Activated CD4-positive, alpha-beta T cell treated with anti-CD3 and anti-CD28 coated beads, Interleukin-2, amount 10 ng/mL, durations not matched to agents 24 days and 14 days (primary cell): ENCODE measurements at regions of chr5 and their contacts with region 1.

Region 1: GRCh38 chr5:109688971-109689739 is 572 bp upstream of the MAN2A1 start:
- DNase-seq: peak; percentile 94
- H3K4me3 Mint-ChIP-seq: peak overlapping the region; percentile 93
- H3K27ac Mint-ChIP-seq: peak overlapping the region; percentile 95
- H3K4me1 Mint-ChIP-seq: peaks cover 35% of the 10 kb centered on the region
- H3K27me3 Mint-ChIP-seq: peaks cover 5% of the 10 kb centered on the region

Region 2: GRCh38 chr5:108381954-108382783 is 1307.0 kb before region 1 on chr5 and contains the start of gene FBXL17:
- intact Hi-C with region 1: loop called (anchors 2 kb)
- DNase-seq: peak; percentile 97
- H3K4me3 Mint-ChIP-seq: peak within 1 kb of the TSS; percentile 84
- H3K27ac Mint-ChIP-seq: peak within 1 kb of the TSS; percentile 91
- H3K4me1 Mint-ChIP-seq: peaks cover 22% of the 10 kb centered on the region
- H3K27me3 Mint-ChIP-seq: no peaks in the 10 kb centered on the region
- total RNA-seq, gene FBXL17: 7.5 and 8.6 TPM in 2 replicates

Region 3: GRCh38 chr5:109611505-109611904 is 77.7 kb before region 1 on chr5:
- intact Hi-C with region 1: no loop called
- DNase-seq: no peak
- H3K4me3 Mint-ChIP-seq: no peak overlapping the region
- H3K27ac Mint-ChIP-seq: no peak overlapping the region
- H3K4me1 Mint-ChIP-seq: no peaks in the 10 kb centered on the region
- H3K27me3 Mint-ChIP-seq: no peaks in the 10 kb centered on the region

Region 4: GRCh38 chr5:109788596-109788995 is 99.4 kb after region 1 on chr5:
- intact Hi-C with region 1: loop called (anchors 5 kb)
- DNase-seq: no peak
- H3K4me3 Mint-ChIP-seq: no peak overlapping the region
- H3K27ac Mint-ChIP-seq: no peak overlapping the region
- H3K4me1 Mint-ChIP-seq: peaks cover 2% of the 10 kb centered on the region
- H3K27me3 Mint-ChIP-seq: no peaks in the 10 kb centered on the region

Region 5: GRCh38 chr5:109936996-109937395 is 247.8 kb after region 1 on chr5:
- intact Hi-C with region 1: loop called (anchors 5 kb)
- DNase-seq: peak; percentile 64
- H3K4me3 Mint-ChIP-seq: peak overlapping the region; percentile 27
- H3K27ac Mint-ChIP-seq: peak overlapping the region; percentile 25
- H3K4me1 Mint-ChIP-seq: peaks cover 15% of the 10 kb centered on the region
- H3K27me3 Mint-ChIP-seq: no peaks in the 10 kb centered on the region

Region 6: GRCh38 chr5:110321117-110321516 is 632.0 kb after region 1 on chr5:
- intact Hi-C with region 1: loop called (anchors 10 kb)
- DNase-seq: no peak
- H3K4me3 Mint-ChIP-seq: no peak overlapping the region
- H3K27ac Mint-ChIP-seq: no peak overlapping the region
- H3K4me1 Mint-ChIP-seq: no peaks in the 10 kb centered on the region
- H3K27me3 Mint-ChIP-seq: no peaks in the 10 kb centered on the region

Region 7: DNA sequence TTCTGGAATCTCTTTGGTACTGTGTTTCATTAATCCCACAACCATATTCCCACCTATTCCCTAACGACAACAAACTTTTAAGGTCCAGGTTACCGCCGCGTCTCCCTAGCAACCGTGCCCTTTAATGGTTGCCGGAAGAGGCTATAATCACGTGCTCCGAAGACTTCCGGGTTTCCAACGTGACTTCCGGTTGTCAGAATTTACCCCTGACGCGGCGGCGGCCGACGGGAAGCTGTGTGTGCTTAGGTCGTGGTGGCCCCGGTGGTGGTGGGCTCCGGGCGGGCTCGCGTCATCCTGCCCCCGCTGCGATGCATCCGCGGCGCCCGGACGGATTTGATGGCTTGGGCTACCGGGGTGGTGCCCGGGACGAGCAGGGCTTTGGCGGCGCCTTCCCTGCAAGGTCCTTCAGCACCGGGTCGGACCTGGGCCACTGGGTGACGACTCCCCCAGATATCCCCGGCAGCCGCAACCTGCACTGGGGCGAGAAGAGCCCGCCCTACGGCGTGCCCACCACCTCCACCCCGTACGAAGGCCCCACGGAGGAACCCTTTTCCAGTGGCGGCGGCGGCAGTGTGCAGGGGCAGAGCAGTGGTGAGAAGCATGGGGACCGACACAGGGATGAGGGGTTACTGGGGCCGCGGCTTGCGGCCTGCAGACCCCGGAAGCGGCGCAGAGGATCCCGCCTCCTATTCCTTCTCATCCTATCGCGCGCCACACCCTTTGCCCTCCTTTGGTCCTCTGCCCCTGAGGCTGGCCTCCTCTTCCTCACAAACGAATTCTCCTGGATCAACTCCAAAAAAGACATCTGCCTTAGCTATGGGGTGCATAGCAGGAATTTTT is 1049.9 kb after region 1 on chr5 and contains the start of gene SLC25A46:
- intact Hi-C with region 1: loop called (anchors 2 kb)
- DNase-seq: peak; percentile 97
- H3K4me3 Mint-ChIP-seq: peak within 1 kb of the TSS; percentile 97
- H3K27ac Mint-ChIP-seq: peak within 1 kb of the TSS; percentile 96
- H3K4me1 Mint-ChIP-seq: peaks cover 24% of the 10 kb centered on the region
- H3K27me3 Mint-ChIP-seq: peaks cover 14% of the 10 kb centered on the region
- total RNA-seq, gene SLC25A46: 47.0 and 49.4 TPM in 2 replicates